CD14-positive monocyte (primary cell): ENCODE measurements at regions of chr7 and their contacts with region 1.

Region 1: GRCh38 chr7:92447345-92448204 is at the start of gene GATAD1:
- DNase-seq: peak; percentile 82 to 91 (median 88)
- H3K4me3 ChIP-seq: peak within 1 kb of the TSS; percentile 80 to 92 (median 86)
- H3K4me3 Mint-ChIP-seq: peak within 1 kb of the TSS; percentile 91 to 95
- H3K27ac ChIP-seq: peak within 1 kb of the TSS; percentile 77 to 97
- H3K27ac Mint-ChIP-seq: peak within 1 kb of the TSS; percentile 91 to 98 (median 97)
- H3K4me1 ChIP-seq: peaks cover 5 to 7% of the 10 kb centered on the region in 2 donors
- H3K4me1 Mint-ChIP-seq: peaks cover 9% of the 10 kb centered on the region
- H3K27me3 ChIP-seq: no peaks in the 10 kb centered on the region
- H3K27me3 Mint-ChIP-seq: no peaks in the 10 kb centered on the region
- CTCF ChIP-seq: peak; percentile 40
- polyA plus RNA-seq, gene GATAD1: 6.6 to 34.1 (median 7.6) TPM

Region 2: GRCh38 chr7:92134271-92135051 is 313.1 kb before region 1 on chr7 and contains the start of gene CYP51A1:
- intact Hi-C with region 1: loop called in 1 of 2 experiments (anchors 10 kb)
- DNase-seq: peak; percentile 81 to 89 (median 81)
- H3K4me3 ChIP-seq: peak within 1 kb of the TSS; percentile 87 to 98 (median 90)
- H3K4me3 Mint-ChIP-seq: peak within 1 kb of the TSS; percentile 96 to 99
- H3K27ac ChIP-seq: peak within 1 kb of the TSS; percentile 86 to 93
- H3K27ac Mint-ChIP-seq: peak within 1 kb of the TSS; percentile 95 to 100 (median 100)
- H3K4me1 ChIP-seq: peaks cover 12 to 22% of the 10 kb centered on the region in 2 donors
- H3K4me1 Mint-ChIP-seq: peaks cover 23% of the 10 kb centered on the region
- H3K27me3 ChIP-seq: no peaks in the 10 kb centered on the region
- H3K27me3 Mint-ChIP-seq: peaks cover 0 to 8% (median 1%) of the 10 kb centered on the region in 3 donors
- CTCF ChIP-seq: no peak
- polyA plus RNA-seq, gene CYP51A1: 5.9 to 32.4 (median 27.4) TPM

Region 3: DNA sequence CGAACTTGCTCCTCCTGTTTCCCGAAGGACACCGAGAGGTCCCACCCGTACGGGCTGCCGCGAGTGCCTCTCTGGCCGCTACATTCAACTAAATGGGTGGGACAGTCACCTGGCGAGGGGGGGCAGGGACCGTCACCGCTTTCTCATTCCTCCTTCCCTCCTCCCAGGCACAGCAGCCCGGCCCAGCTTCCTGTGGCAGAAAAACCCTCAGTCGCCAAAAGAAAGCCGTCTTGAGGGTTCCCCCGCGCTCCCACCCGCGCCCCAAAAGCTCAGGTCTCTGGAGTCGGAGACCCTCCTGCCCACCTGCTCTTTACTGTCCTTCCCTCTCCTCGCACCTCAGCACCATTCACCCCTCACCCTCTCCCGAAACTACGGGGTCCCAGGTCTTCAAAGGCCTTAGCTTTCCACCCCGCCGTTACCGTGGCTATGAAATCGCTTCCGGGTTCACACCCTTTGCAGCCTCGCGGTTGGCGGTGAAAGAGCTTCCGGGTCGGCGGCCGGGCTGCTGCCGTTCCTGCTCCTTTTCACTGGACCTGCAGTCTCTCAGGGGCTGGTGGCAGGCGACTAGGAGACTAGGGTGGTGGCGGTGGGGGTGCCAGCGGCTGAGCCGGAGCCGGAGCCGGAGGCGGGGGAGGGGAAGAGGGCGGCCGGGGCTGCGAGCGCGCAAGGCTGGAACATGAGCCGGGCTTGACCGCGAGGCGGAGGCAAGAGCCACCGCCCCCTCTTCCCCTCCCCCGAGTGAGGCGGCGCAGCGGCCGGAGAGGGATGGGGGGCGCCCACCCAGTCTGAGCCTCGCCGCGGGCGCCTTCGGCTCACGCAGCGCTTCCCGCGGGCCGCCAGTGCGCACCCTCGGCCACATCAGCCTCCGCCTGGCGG is 201.8 kb before region 1 on chr7 and contains the starts of genes ANKIB1 and KRIT1:
- intact Hi-C with region 1: loop called (anchors 5 to 10 kb)
- DNase-seq: peak; percentile 75 to 82 (median 81)
- H3K4me3 ChIP-seq: peak within 1 kb of the TSS; percentile 66 to 83 (median 72)
- H3K4me3 Mint-ChIP-seq: peak within 1 kb of the TSS; percentile 98 to 99
- H3K27ac ChIP-seq: peak within 1 kb of the TSS; percentile 93 to 95
- H3K27ac Mint-ChIP-seq: peak within 1 kb of the TSS; percentile 98 to 100 (median 99)
- H3K4me1 ChIP-seq: peaks cover 22 to 36% of the 10 kb centered on the region in 2 donors
- H3K4me1 Mint-ChIP-seq: peaks cover 39% of the 10 kb centered on the region
- H3K27me3 ChIP-seq: no peaks in the 10 kb centered on the region
- H3K27me3 Mint-ChIP-seq: no peaks in the 10 kb centered on the region
- CTCF ChIP-seq: peak; percentile 18
- polyA plus RNA-seq, gene ANKIB1: 4.8 to 16.8 (median 5.7) TPM
- polyA plus RNA-seq, gene KRIT1: 4.7 to 28.8 (median 6.8) TPM

Region 4: DNA sequence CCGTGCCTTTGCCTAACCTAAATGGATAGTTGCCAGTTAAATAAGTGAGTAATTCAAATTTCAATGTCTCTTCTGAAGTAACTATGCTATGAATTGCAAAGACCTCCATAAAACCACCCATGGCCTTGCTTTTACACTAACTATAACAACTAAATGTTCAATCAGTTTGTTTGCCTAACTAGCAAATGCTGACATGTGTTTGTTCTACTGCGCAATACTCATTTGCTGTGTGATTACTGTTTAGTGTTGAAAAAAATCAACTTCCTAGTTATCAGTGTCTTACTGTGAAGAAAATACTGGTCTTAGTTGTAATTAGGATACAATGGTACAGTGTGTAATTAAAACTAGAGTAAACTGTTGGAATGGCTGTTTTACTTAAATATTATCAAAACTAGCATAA is 47.6 kb before region 1 on chr7:
- intact Hi-C with region 1: no loop called
- DNase-seq: no peak
- H3K4me3 ChIP-seq: no peak overlapping the region
- H3K4me3 Mint-ChIP-seq: no peak overlapping the region
- H3K27ac ChIP-seq: no peak overlapping the region
- H3K27ac Mint-ChIP-seq: no peak overlapping the region
- H3K4me1 ChIP-seq: peaks cover 0 to 4% of the 10 kb centered on the region in 2 donors
- H3K4me1 Mint-ChIP-seq: peaks cover 8% of the 10 kb centered on the region
- H3K27me3 ChIP-seq: no peaks in the 10 kb centered on the region
- H3K27me3 Mint-ChIP-seq: no peaks in the 10 kb centered on the region
- CTCF ChIP-seq: no peak

Region 5: DNA sequence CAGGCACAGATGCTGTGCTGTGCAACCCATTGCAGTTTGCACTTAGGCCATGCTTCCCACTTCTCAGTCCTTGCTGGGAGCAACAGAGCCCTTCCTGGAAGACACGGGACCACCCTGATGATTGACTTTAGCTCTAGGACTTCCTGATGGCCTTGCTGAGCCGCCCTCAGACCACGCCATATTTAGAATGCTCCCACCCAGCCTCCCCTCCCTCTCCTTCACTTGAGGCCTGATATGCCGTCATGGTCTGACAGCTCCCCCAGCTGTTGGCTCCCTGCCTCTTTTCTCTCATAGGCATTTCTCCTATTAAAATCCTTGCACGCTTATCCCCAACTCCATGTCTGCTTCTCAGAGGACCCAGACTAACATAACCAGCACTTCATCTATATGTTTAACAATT is 29.7 kb before region 1 on chr7:
- intact Hi-C with region 1: no loop called
- DNase-seq: no peak
- H3K4me3 ChIP-seq: no peak overlapping the region
- H3K4me3 Mint-ChIP-seq: no peak overlapping the region
- H3K27ac ChIP-seq: no peak overlapping the region
- H3K27ac Mint-ChIP-seq: no peak overlapping the region
- H3K4me1 ChIP-seq: peaks cover 0 to 6% of the 10 kb centered on the region in 2 donors
- H3K4me1 Mint-ChIP-seq: peaks cover 13% of the 10 kb centered on the region
- H3K27me3 ChIP-seq: peaks cover 0 to 2% of the 10 kb centered on the region in 2 donors
- H3K27me3 Mint-ChIP-seq: peaks cover under 1 to 4% (median 3%) of the 10 kb centered on the region in 3 donors
- CTCF ChIP-seq: no peak

Region 6: DNA sequence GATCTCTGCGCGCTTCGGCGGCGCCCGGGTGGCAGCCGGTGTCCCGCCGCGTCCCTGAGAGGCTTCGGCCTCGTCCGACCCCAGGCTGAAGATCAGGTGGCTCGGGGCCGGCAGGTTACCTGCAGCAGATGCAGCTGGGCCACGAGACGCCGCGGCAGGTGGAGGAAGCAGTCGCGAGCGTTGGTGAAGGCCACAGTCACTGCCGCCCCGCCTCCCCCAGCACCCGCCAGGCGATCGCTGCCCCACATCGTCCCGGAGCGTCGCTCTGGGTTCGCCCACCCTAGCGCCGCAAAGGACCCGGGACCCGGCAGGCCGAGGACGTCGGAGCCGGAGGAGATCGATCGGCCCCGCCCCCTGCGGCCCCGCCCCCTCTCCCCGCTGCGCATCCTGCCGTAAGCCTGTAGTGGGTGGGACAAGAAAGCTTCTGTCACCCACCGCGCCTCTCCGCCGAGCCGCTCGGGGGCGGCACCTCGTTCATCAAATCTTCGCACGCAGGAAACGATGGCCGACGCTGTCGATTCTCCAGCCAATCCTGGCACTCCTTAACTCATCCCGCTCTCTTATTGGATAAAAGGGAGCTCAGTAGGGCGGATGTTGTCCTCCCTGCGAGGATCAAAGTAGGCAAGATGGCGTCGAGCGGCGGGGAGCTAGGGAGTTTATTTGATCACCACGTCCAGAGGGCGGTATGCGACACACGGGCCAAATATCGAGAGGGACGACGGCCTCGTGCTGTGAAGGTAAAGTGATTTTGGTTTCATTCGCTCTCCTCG is 80.8 kb after region 1 on chr7 and contains the starts of genes PEX1 and RBM48:
- intact Hi-C with region 1: loop called in 1 of 2 experiments (anchors 5 kb)
- DNase-seq: peak; percentile 96 to 98 (median 97)
- H3K4me3 ChIP-seq: peak within 1 kb of the TSS; percentile 88 to 97 (median 92)
- H3K4me3 Mint-ChIP-seq: peak within 1 kb of the TSS; percentile 90 to 94
- H3K27ac ChIP-seq: peak within 1 kb of the TSS; percentile 87 to 97
- H3K27ac Mint-ChIP-seq: peak within 1 kb of the TSS; percentile 94 to 98 (median 96)
- H3K4me1 ChIP-seq: peaks cover 15 to 20% of the 10 kb centered on the region in 2 donors
- H3K4me1 Mint-ChIP-seq: peaks cover 16% of the 10 kb centered on the region
- H3K27me3 ChIP-seq: no peaks in the 10 kb centered on the region
- H3K27me3 Mint-ChIP-seq: no peaks in the 10 kb centered on the region
- CTCF ChIP-seq: no peak
- polyA plus RNA-seq, gene PEX1: 2.8 to 10.8 (median 2.9) TPM
- polyA plus RNA-seq, gene RBM48: 5.2 to 8.5 (median 6.1) TPM